Ovary (tissue), 10 donors: ENCODE measurements at regions of chr6 and their contacts with region 1.

Region 1: DNA sequence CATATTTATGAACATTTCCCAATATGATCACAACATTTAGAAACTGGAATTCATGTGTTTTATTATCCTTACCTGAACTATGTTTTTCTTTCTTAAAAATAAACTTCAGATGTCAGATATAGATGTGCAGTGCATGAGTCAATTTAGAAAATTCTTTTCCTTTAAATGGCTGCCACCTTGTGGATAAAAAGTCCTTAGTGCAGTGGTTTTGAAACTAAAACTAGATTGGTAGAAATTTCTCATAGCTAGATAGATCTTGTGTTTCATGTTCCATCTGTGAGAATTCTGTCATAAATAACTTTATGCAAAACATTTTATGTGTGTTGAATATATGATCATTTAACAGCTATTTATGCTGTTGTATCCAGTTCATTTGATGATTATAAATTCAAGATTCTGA is 134.9 kb downstream of the KLHL32 start:
- DNase-seq: no peak
- H3K4me3 ChIP-seq: no peak overlapping the region
- H3K27ac ChIP-seq: no peak overlapping the region
- H3K4me1 ChIP-seq: no peaks in the 10 kb centered on the region
- H3K27me3 ChIP-seq: no peaks in the 10 kb centered on the region
- CTCF ChIP-seq: no peak
- EP300 ChIP-seq: no peak
- POLR2A ChIP-seq: no peak

Region 2: DNA sequence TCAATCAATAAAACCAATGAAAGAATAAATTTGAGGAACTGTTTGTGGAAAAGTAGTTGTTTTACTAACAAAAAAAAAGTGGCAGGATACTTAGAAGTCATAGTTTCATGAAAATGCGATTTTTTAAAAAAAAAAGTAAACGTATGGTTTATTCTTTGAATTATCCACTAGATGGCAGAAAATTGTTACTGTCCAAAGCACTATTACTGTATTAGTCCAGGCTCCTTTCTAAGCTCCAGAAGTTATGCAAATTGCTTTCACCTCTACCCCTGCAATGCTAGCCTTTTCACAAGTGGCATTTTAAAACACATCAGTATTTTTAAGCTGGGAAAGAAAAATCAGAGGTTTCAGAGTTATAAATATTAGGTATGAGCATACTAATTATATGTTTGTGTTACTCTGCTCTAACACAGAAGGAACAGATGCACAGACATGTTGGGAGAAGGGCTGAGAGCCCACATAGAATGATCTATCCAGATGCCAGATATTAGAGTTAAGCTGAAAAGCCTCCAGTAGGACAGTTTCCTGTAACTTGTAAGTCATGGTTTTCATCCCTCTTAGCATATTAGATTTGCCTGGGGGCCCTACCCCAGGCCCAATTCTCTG is 432.6 kb before region 1 on chr6:
- intact Hi-C with region 1: loop called in 3 of 4 experiments (anchors 5 to 10 kb)
- DNase-seq: no peak
- H3K4me3 ChIP-seq: no peak overlapping the region
- H3K27ac ChIP-seq: no peak overlapping the region
- H3K4me1 ChIP-seq: no peaks in the 10 kb centered on the region
- H3K27me3 ChIP-seq: no peaks in the 10 kb centered on the region
- CTCF ChIP-seq: peak in 2 of 3 donors; percentile 19 to 23
- EP300 ChIP-seq: no peak
- POLR2A ChIP-seq: no peak

Region 3: GRCh38 chr6:96897383-96898240 is 161.9 kb before region 1 on chr6 and contains the start of gene NDUFAF4:
- intact Hi-C with region 1: loop called in 3 of 4 experiments (anchors 5 to 10 kb)
- DNase-seq: peak; percentile 96 to 98 (median 97)
- H3K4me3 ChIP-seq: peak within 1 kb of the TSS; percentile 69
- H3K27ac ChIP-seq: peak within 1 kb of the TSS; percentile 76 to 81
- H3K4me1 ChIP-seq: peaks cover 6% of the 10 kb centered on the region
- H3K27me3 ChIP-seq: no peaks in the 10 kb centered on the region
- CTCF ChIP-seq: peak; percentile 92 to 95 (median 93)
- EP300 ChIP-seq: no peak
- POLR2A ChIP-seq: peak; percentile 58
- total RNA-seq, gene NDUFAF4: 10.3 to 35.5 (median 18.2) TPM

Region 4: GRCh38 chr6:97465877-97466561 is 406.5 kb after region 1 on chr6:
- intact Hi-C with region 1: no loop called
- DNase-seq: no peak
- H3K4me3 ChIP-seq: no peak overlapping the region
- H3K27ac ChIP-seq: no peak overlapping the region
- H3K4me1 ChIP-seq: no peaks in the 10 kb centered on the region
- H3K27me3 ChIP-seq: no peaks in the 10 kb centered on the region
- CTCF ChIP-seq: no peak
- EP300 ChIP-seq: no peak
- POLR2A ChIP-seq: no peak